H1 (cell line): ENCODE measurements at regions of chr1 and their contacts with region 1.

Region 1: GRCh38 chr1:222171005-222171404 is 376.9 kb downstream of the HHIPL2 start:
- DNase-seq: peak in 1 of 2 experiments; percentile 42
- H3K4me3 ChIP-seq: no peak overlapping the region
- H3K27ac ChIP-seq: no peak overlapping the region
- H3K4me1 ChIP-seq: no peaks in the 10 kb centered on the region
- H3K27me3 ChIP-seq: no peaks in the 10 kb centered on the region
- CTCF ChIP-seq: peak in 2 of 3 experiments; percentile 59; a peak in 3 of 4 replicates
- EP300 ChIP-seq: no peak
- POLR2A ChIP-seq: no peak
- RAD21 ChIP-seq: peak; percentile 75 to 79

Region 2: DNA sequence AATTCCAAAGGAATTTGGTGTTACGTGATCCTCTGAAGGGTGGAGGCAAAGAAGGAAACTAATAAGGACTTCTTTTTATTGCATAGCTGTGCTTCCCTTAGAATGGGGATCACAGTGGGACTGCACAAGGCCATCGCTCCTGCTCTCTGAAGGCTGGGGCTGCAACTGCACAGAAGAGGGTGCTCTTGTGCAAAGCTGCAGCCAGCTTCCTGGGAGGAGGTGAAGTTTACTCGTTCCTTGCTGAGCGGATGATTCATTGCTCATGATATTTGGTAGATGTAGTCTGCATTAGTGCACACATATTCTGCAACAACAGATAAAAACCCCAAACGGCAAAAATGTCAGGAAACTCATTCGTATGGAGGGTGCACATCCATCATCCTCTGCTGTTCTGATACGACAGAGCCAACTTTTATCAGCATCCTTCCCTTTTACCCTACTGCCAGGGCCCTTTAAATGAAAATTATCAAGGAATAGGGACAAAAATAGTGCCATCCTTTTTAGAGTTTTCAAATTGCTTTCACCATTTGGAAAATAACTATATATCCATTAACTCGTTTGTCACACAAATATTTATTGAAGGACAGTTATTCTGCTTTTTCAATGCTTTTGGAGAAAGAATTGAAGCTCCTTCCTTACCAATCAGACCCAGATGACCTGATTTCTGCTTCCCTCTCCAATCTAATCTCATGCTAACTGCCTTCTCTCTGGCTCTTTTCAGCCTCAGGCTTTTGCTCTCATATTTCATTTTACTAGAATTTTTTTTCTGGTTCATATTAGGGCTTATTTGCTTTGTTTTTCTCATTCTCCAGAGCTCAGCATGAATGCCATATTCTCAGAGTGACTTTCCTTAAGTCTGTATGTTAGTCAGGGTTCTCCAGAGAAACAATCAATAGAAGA is 692.7 kb before region 1 on chr1:
- CTCF ChIA-PET with region 1: interaction called, 16 read pairs
- POLR2A ChIA-PET with region 1: no interaction called
- DNase-seq: peak; percentile 25 to 46
- H3K4me3 ChIP-seq: no peak overlapping the region
- H3K27ac ChIP-seq: no peak overlapping the region
- H3K4me1 ChIP-seq: no peaks in the 10 kb centered on the region
- H3K27me3 ChIP-seq: no peaks in the 10 kb centered on the region
- CTCF ChIP-seq: peak; percentile 70 to 85 (median 84)
- EP300 ChIP-seq: no peak
- POLR2A ChIP-seq: no peak
- RAD21 ChIP-seq: peak; percentile 90 to 93

Region 3: DNA sequence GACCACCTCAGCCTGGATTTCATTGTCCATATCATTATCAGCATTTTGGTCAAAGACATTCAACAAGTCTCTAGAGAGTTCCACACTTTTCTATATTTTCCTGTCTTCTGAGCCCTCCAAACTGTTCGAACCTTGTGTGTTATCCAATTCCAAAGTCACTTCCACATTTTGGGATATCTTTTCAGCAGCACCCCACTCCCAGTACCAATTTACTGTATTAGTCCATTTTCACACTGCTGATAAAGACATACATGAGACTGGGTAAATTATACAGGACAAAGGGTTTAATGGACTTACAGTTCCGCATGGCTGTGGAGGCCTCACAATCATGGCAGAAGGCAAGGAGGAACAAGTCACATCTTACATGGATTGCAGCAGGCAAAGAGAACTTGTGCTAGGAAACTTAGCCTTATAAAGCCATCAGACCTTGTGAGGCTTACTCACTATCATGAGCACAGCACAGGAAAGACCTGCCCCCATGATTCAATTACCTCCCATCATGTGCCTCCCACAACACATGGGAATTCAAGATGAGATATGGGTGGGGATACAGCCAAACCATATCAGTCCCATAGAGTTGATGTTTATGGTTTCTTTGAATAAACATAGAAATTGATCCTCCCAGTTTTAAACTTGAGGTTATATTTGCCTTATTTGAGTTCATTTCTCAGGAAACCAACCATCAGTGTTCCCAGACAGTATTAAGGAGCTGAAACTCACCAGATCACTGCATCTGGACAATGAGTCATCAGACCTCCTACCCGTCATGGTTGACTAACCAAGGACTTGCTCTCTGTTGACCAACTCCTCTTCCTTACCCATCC is 106.4 kb before region 1 on chr1:
- CTCF ChIA-PET with region 1: no interaction called
- POLR2A ChIA-PET with region 1: no interaction called
- DNase-seq: no peak
- H3K4me3 ChIP-seq: no peak overlapping the region
- H3K27ac ChIP-seq: no peak overlapping the region
- H3K4me1 ChIP-seq: no peaks in the 10 kb centered on the region
- H3K27me3 ChIP-seq: no peaks in the 10 kb centered on the region; a peak in 1 of 7 replicates
- CTCF ChIP-seq: no peak
- EP300 ChIP-seq: no peak
- POLR2A ChIP-seq: no peak
- RAD21 ChIP-seq: no peak

Region 4: GRCh38 chr1:222124602-222125001 is 46.4 kb before region 1 on chr1:
- CTCF ChIA-PET with region 1: interaction called, 25 read pairs
- POLR2A ChIA-PET with region 1: no interaction called
- DNase-seq: no peak
- H3K4me3 ChIP-seq: no peak overlapping the region
- H3K27ac ChIP-seq: no peak overlapping the region
- H3K4me1 ChIP-seq: no peaks in the 10 kb centered on the region
- H3K27me3 ChIP-seq: no peaks in the 10 kb centered on the region
- CTCF ChIP-seq: peak in 2 of 3 experiments; percentile 59 to 78; a peak in 3 of 4 replicates
- EP300 ChIP-seq: no peak
- POLR2A ChIP-seq: no peak
- RAD21 ChIP-seq: peak; percentile 74

Region 5: GRCh38 chr1:222187566-222188332 is 16.7 kb after region 1 on chr1:
- CTCF ChIA-PET with region 1: interaction called, 10 read pairs
- POLR2A ChIA-PET with region 1: no interaction called
- DNase-seq: no peak
- H3K4me3 ChIP-seq: no peak overlapping the region
- H3K27ac ChIP-seq: no peak overlapping the region
- H3K4me1 ChIP-seq: no peaks in the 10 kb centered on the region
- H3K27me3 ChIP-seq: no peaks in the 10 kb centered on the region
- CTCF ChIP-seq: no peak
- EP300 ChIP-seq: no peak
- POLR2A ChIP-seq: no peak
- RAD21 ChIP-seq: no peak

Region 6: DNA sequence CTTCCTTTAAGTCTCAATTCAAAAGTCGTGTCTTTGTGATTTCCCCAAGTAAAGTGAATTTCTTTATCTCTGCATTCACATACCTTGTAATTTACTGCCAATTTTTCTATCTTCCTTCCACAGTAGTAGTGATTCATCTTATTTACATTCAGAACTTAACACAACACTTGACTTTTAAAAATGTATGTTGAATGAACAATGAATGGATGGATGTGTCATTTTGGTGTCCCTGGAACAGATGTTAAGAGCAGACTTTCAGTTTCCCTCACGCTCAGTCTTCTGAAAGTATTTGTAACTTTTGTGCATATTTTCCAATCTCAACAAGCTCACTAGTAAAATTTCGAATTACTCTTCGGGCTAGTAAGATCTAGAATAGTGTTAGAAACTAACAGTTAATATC is 24.9 kb after region 1 on chr1:
- CTCF ChIA-PET with region 1: interaction called, 10 read pairs
- POLR2A ChIA-PET with region 1: no interaction called
- DNase-seq: no peak
- H3K4me3 ChIP-seq: no peak overlapping the region
- H3K27ac ChIP-seq: no peak overlapping the region
- H3K4me1 ChIP-seq: no peaks in the 10 kb centered on the region
- H3K27me3 ChIP-seq: no peaks in the 10 kb centered on the region
- CTCF ChIP-seq: no peak
- EP300 ChIP-seq: no peak
- POLR2A ChIP-seq: no peak
- RAD21 ChIP-seq: no peak

Region 7: GRCh38 chr1:222455188-222455879 is 284.3 kb after region 1 on chr1:
- CTCF ChIA-PET with region 1: interaction called, 20 read pairs
- POLR2A ChIA-PET with region 1: interaction called, 3 read pairs
- DNase-seq: peak; percentile 50 to 90
- H3K4me3 ChIP-seq: no peak overlapping the region
- H3K27ac ChIP-seq: no peak overlapping the region
- H3K4me1 ChIP-seq: no peaks in the 10 kb centered on the region; a peak in 2 of 7 replicates
- H3K27me3 ChIP-seq: no peaks in the 10 kb centered on the region
- CTCF ChIP-seq: peak; percentile 89 to 99 (median 94)
- EP300 ChIP-seq: no peak
- POLR2A ChIP-seq: no peak
- RAD21 ChIP-seq: peak; percentile 95 to 96

Region 8: GRCh38 chr1:222465211-222466041 is 294.4 kb after region 1 on chr1:
- CTCF ChIA-PET with region 1: interaction called, 10 read pairs
- POLR2A ChIA-PET with region 1: no interaction called
- DNase-seq: peak; percentile 88 to 96
- H3K4me3 ChIP-seq: peak overlapping the region; percentile 48 to 86 (median 67)
- H3K27ac ChIP-seq: 0 out of 2 replicates have a peak overlapping the region, but pooled peaks have one; percentile 50
- H3K4me1 ChIP-seq: no peaks in the 10 kb centered on the region
- H3K27me3 ChIP-seq: no peaks in the 10 kb centered on the region
- CTCF ChIP-seq: peak; percentile 97 to 99 (median 99)
- EP300 ChIP-seq: peak in 1 of 2 experiments; percentile 34; a peak in 1 of 3 replicates
- POLR2A ChIP-seq: peak; percentile 60 to 70; a peak in 2 of 3 replicates
- RAD21 ChIP-seq: peak; percentile 94 to 98